ENCODE measurements at regions of chr22 and their contacts with region 1.

Region 1: GRCh38 chr22:50030297-50031188 is 18.0 kb upstream of the IL17REL start:
- DNase-seq: peak; percentile 83
- H3K4me3 ChIP-seq: no peak overlapping the region
- H3K27ac ChIP-seq: no peak overlapping the region
- H3K4me1 ChIP-seq: no peaks in the 10 kb centered on the region
- H3K27me3 ChIP-seq: peaks cover 5% of the 10 kb centered on the region

Region 2: DNA sequence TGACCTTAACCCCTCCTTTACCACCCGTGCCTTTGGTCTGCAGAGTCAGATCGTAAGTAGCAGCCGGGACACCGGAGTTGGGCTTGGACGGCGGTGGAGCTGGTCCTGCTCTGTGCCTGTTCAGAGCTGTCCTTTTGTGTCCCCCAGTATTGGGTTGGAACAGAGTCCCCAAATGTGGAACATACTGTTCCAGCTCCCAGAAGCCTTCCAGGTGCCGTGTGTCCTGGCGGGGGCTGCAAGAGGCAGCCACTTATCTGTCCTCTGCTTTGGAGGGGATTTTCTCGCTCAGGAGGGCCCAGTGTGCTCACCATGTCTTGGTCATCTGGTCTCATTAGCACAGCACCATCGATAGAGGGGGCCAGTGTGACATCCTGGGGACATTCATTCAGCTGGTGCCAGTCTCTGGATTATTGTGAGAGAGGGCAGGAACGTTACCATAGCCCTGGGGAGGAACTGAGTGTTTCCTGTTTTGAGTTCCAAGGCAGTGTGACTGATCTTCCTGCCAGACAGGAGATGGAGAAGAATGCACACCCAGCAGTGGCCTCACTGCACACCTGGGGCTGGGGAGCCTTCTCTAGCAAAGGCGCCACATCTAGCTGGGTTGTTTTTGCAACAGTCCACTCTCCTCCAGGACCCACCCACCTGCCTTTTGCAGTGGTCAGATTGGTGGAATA is 99.7 kb before region 1 on chr22:
- in situ Hi-C with region 1: loop called (anchors 5 kb)
- DNase-seq: peak; percentile 67
- H3K4me3 ChIP-seq: no peak overlapping the region
- H3K27ac ChIP-seq: no peak overlapping the region
- H3K4me1 ChIP-seq: peaks cover 13% of the 10 kb centered on the region; the same call in 1 of the 2 replicates
- H3K27me3 ChIP-seq: no peaks in the 10 kb centered on the region